ENCODE measurements at regions of chr7 and their contacts with region 1.

Region 1: GRCh38 chr7:36670585-36671431 is 53.5 kb downstream of the AOAH start:
- DNase-seq: peak; percentile 77
- H3K4me3 Mint-ChIP-seq: no peak overlapping the region
- H3K27ac Mint-ChIP-seq: peak overlapping the region; percentile 4
- H3K4me1 Mint-ChIP-seq: peaks cover 34% of the 10 kb centered on the region
- H3K27me3 Mint-ChIP-seq: no peaks in the 10 kb centered on the region

Region 2: GRCh38 chr7:36487756-36488336 is 183.0 kb before region 1 on chr7:
- CTCF ChIA-PET with region 1: interaction called, 17 read pairs
- POLR2A ChIA-PET with region 1: no interaction called
- DNase-seq: peak; percentile 64
- H3K4me3 Mint-ChIP-seq: no peak overlapping the region
- H3K27ac Mint-ChIP-seq: no peak overlapping the region
- H3K4me1 Mint-ChIP-seq: peaks cover 1% of the 10 kb centered on the region
- H3K27me3 Mint-ChIP-seq: peaks cover 3% of the 10 kb centered on the region

Region 3: DNA sequence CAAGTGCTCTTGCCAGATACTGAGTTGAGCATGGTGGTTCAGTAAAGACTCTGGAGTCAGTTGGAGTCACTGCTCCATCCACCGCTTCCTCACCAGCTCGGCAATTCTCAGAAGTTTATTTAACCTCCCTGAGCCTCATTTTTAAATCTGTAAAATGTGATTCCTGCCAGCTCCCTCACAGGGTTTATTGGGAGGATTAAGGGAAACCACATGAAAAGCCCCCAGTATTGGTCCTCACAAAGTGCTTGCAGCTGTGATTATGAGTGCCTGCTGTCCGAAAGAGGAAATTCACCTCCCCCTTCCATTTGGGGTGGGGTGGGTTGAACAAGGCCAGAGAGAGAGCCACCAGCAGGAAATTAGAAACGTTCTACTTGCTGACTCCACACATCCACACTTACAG is 45.6 kb before region 1 on chr7:
- CTCF ChIA-PET with region 1: no interaction called
- POLR2A ChIA-PET with region 1: no interaction called
- DNase-seq: no peak
- H3K4me3 Mint-ChIP-seq: no peak overlapping the region
- H3K27ac Mint-ChIP-seq: no peak overlapping the region
- H3K4me1 Mint-ChIP-seq: peaks cover 8% of the 10 kb centered on the region
- H3K27me3 Mint-ChIP-seq: no peaks in the 10 kb centered on the region

Region 4: GRCh38 chr7:36639826-36640225 is 31.0 kb before region 1 on chr7:
- CTCF ChIA-PET with region 1: interaction called, 12 read pairs
- POLR2A ChIA-PET with region 1: no interaction called
- DNase-seq: peak; percentile 75
- H3K4me3 Mint-ChIP-seq: peak overlapping the region; percentile 50
- H3K27ac Mint-ChIP-seq: peak overlapping the region; percentile 98
- H3K4me1 Mint-ChIP-seq: peaks cover 64% of the 10 kb centered on the region
- H3K27me3 Mint-ChIP-seq: no peaks in the 10 kb centered on the region

Region 5: DNA sequence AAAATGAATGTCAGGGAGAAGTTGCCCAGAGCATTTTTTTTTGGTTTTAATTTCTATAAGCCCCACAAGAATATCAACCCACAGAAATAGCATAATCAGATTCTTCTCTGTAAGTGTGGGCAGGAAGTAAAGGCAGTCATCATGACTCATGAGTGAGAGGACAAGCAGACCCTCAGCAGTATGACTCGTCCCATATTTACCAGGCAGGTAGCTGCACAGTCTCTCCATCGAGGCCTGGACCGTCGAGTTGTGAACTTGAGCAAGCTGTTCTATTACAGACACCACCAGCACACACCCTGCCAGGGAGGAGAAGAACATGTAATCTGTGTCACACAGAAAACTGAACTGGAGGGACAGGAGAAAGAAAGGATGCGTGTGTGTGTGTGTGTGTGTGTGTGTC is 15.7 kb after region 1 on chr7:
- CTCF ChIA-PET with region 1: interaction called, 11 read pairs
- POLR2A ChIA-PET with region 1: no interaction called
- DNase-seq: no peak
- H3K4me3 Mint-ChIP-seq: no peak overlapping the region
- H3K27ac Mint-ChIP-seq: peak overlapping the region; percentile 75
- H3K4me1 Mint-ChIP-seq: peaks cover 65% of the 10 kb centered on the region
- H3K27me3 Mint-ChIP-seq: no peaks in the 10 kb centered on the region

Region 6: GRCh38 chr7:36734731-36735130 is 63.9 kb after region 1 on chr7:
- CTCF ChIA-PET with region 1: no interaction called
- POLR2A ChIA-PET with region 1: no interaction called
- DNase-seq: no peak
- H3K4me3 Mint-ChIP-seq: no peak overlapping the region
- H3K27ac Mint-ChIP-seq: no peak overlapping the region
- H3K4me1 Mint-ChIP-seq: peaks cover 34% of the 10 kb centered on the region
- H3K27me3 Mint-ChIP-seq: no peaks in the 10 kb centered on the region